CD4-positive, alpha-beta T cell (primary cell): ENCODE measurements at regions of chr19 and their contacts with region 1.

Region 1: DNA sequence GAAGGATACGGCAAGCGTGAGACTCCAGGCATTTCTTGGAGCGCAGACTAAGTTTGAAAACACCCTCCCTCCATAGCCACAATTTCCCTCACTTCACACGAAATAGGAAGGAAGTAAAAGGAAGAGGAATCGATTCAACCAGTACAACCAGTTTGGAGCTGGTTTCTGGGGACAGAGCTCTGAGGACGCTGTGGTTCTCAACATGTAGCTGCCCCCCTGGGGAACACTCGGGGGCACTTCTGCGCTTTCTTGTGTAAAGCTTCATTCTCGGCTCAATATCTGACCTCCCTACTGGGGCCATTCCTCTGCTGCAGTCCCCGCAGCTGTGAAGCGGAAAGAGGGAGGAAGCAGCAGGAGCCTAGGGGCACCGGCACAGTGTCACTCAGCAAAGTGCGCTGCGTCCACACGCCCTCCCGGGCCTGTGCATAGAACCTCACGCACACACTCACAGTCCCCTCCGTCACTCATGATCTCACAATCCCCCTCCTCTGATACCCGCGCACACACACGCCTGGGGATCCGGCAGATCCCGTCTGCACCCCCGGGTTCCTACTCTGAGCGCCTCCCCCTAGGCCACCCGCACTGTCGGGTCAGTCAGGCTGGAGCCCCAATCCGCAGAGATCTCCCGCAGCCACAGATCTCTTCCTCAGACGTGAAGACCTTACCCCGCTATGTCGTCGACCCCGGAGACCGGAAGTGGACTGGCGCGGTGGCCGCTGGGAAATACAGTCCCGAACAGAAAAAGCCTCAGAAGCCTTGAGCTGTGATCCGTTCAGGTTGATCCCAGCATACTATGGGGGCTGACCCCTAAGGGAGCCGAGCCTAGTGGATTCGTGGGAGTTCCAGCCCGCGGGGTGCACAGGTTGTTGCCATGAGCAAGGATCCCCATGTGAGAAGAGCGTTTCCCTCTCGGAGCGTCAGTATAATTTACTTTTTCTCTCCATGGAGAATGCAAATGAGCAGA is at the start of gene ZNF780A:
- DNase-seq: peak; percentile 61 to 86 (median 72)
- ATAC-seq: peak; percentile 96
- H3K4me3 ChIP-seq: peak within 1 kb of the TSS; percentile 81
- H3K4me3 Mint-ChIP-seq: peak within 1 kb of the TSS; percentile 100
- H3K27ac ChIP-seq: peak within 1 kb of the TSS; percentile 89 to 91
- H3K27ac Mint-ChIP-seq: peak within 1 kb of the TSS; percentile 99
- H3K4me1 ChIP-seq: peaks cover 6% of the 10 kb centered on the region
- H3K4me1 Mint-ChIP-seq: peaks cover 47% of the 10 kb centered on the region
- H3K27me3 ChIP-seq: peaks cover 5 to 7% of the 10 kb centered on the region in 2 experiments
- H3K27me3 Mint-ChIP-seq: peaks cover 10% of the 10 kb centered on the region
- CTCF ChIP-seq: no peak
- total RNA-seq, gene ZNF780A: 9.7 to 10.6 TPM

Region 2: GRCh38 chr19:40055832-40056504 is 34.6 kb before region 1 on chr19 and contains the start of gene ZNF780B:
- CTCF ChIA-PET with region 1: no interaction called
- POLR2A ChIA-PET with region 1: interaction called, 19 read pairs
- intact Hi-C with region 1: loop called in 1 of 2 experiments (anchors 5 kb)
- DNase-seq: peak; percentile 47 to 80 (median 57)
- ATAC-seq: peak; percentile 91
- H3K4me3 ChIP-seq: peak within 1 kb of the TSS; percentile 92
- H3K4me3 Mint-ChIP-seq: peak within 1 kb of the TSS; percentile 100
- H3K27ac ChIP-seq: peak within 1 kb of the TSS; percentile 64 to 75
- H3K27ac Mint-ChIP-seq: peak within 1 kb of the TSS; percentile 96
- H3K4me1 ChIP-seq: peaks cover 18% of the 10 kb centered on the region
- H3K4me1 Mint-ChIP-seq: peaks cover 57% of the 10 kb centered on the region
- H3K27me3 ChIP-seq: no peaks in the 10 kb centered on the region
- H3K27me3 Mint-ChIP-seq: no peaks in the 10 kb centered on the region
- CTCF ChIP-seq: no peak
- total RNA-seq, gene ZNF780B: 11.8 to 12.0 TPM

Region 3: DNA sequence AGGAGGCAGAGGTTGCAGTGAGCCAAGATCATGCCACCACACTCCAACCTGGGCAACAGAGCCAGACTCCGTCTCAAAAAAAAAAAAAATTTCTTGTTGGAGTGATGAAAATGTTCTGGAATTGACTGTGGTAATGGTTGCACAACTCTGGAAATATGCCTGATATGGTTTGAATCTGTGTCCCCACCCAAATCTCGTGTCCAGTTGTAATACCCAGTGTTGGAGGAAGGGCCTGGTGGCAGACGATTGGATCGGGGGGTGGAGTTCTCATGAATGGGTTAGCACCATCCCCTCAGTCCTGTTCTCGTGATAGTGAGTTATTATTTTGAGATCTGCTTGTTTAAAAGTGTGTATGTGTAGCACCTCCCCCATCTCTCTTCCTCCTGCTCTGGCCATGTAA is 59.6 kb after region 1 on chr19:
- CTCF ChIA-PET with region 1: no interaction called
- POLR2A ChIA-PET with region 1: no interaction called
- intact Hi-C with region 1: no loop called
- DNase-seq: no peak
- ATAC-seq: no peak
- H3K4me3 ChIP-seq: no peak overlapping the region
- H3K4me3 Mint-ChIP-seq: no peak overlapping the region
- H3K27ac ChIP-seq: no peak overlapping the region
- H3K27ac Mint-ChIP-seq: no peak overlapping the region
- H3K4me1 ChIP-seq: peaks cover 29% of the 10 kb centered on the region
- H3K4me1 Mint-ChIP-seq: peaks cover 18% of the 10 kb centered on the region
- H3K27me3 ChIP-seq: no peaks in the 10 kb centered on the region
- H3K27me3 Mint-ChIP-seq: no peaks in the 10 kb centered on the region
- CTCF ChIP-seq: no peak